ENCODE measurements at regions of chr10 and their contacts with region 1.

Region 1: GRCh38 chr10:77004917-77005564 is 632.6 kb downstream of the KCNMA1 start:
- DNase-seq: no peak
- ATAC-seq: peak; percentile 82
- H3K4me3 ChIP-seq: no peak overlapping the region
- H3K27ac ChIP-seq: no peak overlapping the region
- H3K4me1 ChIP-seq: no peaks in the 10 kb centered on the region
- H3K27me3 ChIP-seq: no peaks in the 10 kb centered on the region
- CTCF ChIP-seq: peak; percentile 80

Region 2: DNA sequence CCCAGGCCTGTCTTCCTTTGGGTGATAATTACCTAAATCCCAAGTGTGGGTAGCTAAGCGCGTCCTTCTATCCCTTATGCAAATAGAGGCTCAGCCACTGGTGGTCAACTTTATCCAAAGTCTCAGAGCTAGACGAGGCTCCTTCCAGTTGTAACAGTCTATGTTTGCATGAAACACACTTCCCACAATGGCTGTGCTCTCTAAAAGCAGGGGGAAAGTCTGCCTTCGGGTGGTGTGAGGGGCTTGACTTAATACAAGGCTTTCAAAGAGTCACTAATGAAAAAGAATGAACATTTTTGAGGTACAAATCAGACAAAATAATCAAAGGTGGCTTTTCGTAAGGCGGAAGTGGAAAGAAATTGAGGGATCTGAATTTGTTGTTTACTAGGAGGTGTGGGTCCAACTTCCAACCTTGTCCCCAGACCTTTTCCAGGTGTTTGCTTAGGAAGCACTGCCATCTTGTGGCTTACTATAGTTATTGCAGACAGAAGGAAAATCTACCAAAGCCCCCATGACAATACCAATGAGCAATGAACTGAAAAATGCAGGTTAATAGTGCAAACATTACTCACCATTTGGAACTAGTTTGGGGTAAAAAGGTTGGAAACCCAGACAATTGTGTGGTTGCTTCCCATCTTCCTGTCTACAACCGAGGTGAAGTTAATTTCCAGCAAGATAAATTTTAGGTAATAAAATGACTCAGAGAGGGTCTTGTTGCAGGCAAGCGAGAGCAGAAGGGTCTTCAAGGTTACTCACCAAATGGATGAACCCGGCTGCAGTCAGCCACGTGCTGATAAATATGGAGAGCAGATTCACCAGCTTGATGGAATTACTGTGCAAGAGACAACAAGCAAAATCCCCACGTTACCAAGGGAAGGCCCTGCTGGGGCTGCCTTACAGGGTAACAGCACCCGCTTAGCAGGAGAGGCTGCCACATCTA is 106.8 kb after region 1 on chr10:
- intact Hi-C with region 1: loop called (anchors 10 kb)
- DNase-seq: no peak
- ATAC-seq: peak; percentile 84
- H3K4me3 ChIP-seq: no peak overlapping the region
- H3K27ac ChIP-seq: no peak overlapping the region
- H3K4me1 ChIP-seq: no peaks in the 10 kb centered on the region
- H3K27me3 ChIP-seq: no peaks in the 10 kb centered on the region
- CTCF ChIP-seq: peak; percentile 88

Measured in upper lobe of right lung (tissue), 1 donor.